H1 (cell line): ENCODE measurements at regions of chr2 and their contacts with region 1.

Region 1: GRCh38 chr2:67340133-67341011 is 56.8 kb upstream of the ETAA1 start:
- DNase-seq: peak in 1 of 2 experiments; percentile 64
- H3K4me3 ChIP-seq: no peak overlapping the region
- H3K27ac ChIP-seq: no peak overlapping the region
- H3K4me1 ChIP-seq: peaks cover 0 to 2% (median 1%) of the 10 kb centered on the region in 4 experiments; a peak in 2 of 7 replicates
- H3K27me3 ChIP-seq: no peaks in the 10 kb centered on the region
- CTCF ChIP-seq: peak in 1 of 3 experiments; percentile 8; a peak in 1 of 4 replicates
- EP300 ChIP-seq: no peak
- POLR2A ChIP-seq: peak; percentile 77 to 84
- RAD21 ChIP-seq: peak in 1 of 2 experiments; percentile 12; a peak in 1 of 4 replicates

Region 2: GRCh38 chr2:67322353-67323001 is 17.9 kb before region 1 on chr2:
- CTCF ChIA-PET with region 1: interaction called, 6 read pairs
- POLR2A ChIA-PET with region 1: interaction called, 12 read pairs
- DNase-seq: peak in 1 of 2 experiments; percentile 54
- H3K4me3 ChIP-seq: no peak overlapping the region
- H3K27ac ChIP-seq: no peak overlapping the region
- H3K4me1 ChIP-seq: peaks cover 0 to 23% (median 8%) of the 10 kb centered on the region in 4 experiments; a peak in 5 of 7 replicates
- H3K27me3 ChIP-seq: no peaks in the 10 kb centered on the region
- CTCF ChIP-seq: peak; percentile 22 to 71 (median 58)
- EP300 ChIP-seq: no peak
- POLR2A ChIP-seq: no peak
- RAD21 ChIP-seq: peak; percentile 81 to 83

Region 3: DNA sequence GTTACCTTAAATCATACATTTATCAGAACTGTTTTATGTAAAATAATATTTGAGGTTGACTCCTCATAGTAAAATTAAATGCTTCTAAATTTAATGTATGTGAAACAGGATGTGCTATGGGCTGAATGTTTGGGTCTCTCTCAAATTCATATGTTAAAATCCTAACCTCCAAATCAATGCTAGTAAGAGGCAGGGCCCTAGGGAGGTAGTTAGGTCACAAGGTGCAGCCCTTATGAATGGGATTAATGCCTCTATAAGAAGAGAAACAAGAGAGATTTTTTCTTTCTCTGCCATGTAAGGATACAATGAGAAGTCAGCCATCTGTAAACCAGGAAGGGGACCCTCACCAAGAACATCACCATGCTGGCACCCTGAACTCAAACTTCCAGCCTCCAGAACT is 10.4 kb before region 1 on chr2:
- CTCF ChIA-PET with region 1: no interaction called
- POLR2A ChIA-PET with region 1: interaction called, 17 read pairs
- DNase-seq: no peak
- H3K4me3 ChIP-seq: peak overlapping the region in 2 of 4 experiments; percentile 5 to 80; a peak in 3 of 8 replicates
- H3K27ac ChIP-seq: no peak overlapping the region
- H3K4me1 ChIP-seq: peaks cover 0 to 29% (median 7%) of the 10 kb centered on the region in 4 experiments; a peak in 4 of 7 replicates
- H3K27me3 ChIP-seq: no peaks in the 10 kb centered on the region
- CTCF ChIP-seq: no peak
- EP300 ChIP-seq: no peak
- POLR2A ChIP-seq: no peak
- RAD21 ChIP-seq: no peak

Region 4: GRCh38 chr2:67389286-67389685 is 48.9 kb after region 1 on chr2:
- CTCF ChIA-PET with region 1: no interaction called
- POLR2A ChIA-PET with region 1: interaction called, 17 read pairs
- DNase-seq: no peak
- H3K4me3 ChIP-seq: peak overlapping the region in 1 of 4 experiments; percentile 2; a peak in 1 of 8 replicates
- H3K27ac ChIP-seq: 0 out of 2 replicates have a peak overlapping the region, but pooled peaks have one; percentile 4
- H3K4me1 ChIP-seq: peaks cover 3 to 11% (median 6%) of the 10 kb centered on the region in 4 experiments; a peak in 5 of 7 replicates
- H3K27me3 ChIP-seq: no peaks in the 10 kb centered on the region
- CTCF ChIP-seq: no peak
- EP300 ChIP-seq: no peak
- POLR2A ChIP-seq: no peak
- RAD21 ChIP-seq: no peak